ENCODE measurements at regions of chr12 and their contacts with region 1.

Region 1: GRCh38 chr12:53321074-53321814 is at the start of gene AAAS:
- DNase-seq: peak; percentile 98
- H3K4me3 Mint-ChIP-seq: peak within 1 kb of the TSS; percentile 89
- H3K27ac Mint-ChIP-seq: peak within 1 kb of the TSS; percentile 92
- H3K4me1 Mint-ChIP-seq: peaks cover 51% of the 10 kb centered on the region
- H3K27me3 Mint-ChIP-seq: peaks cover 6% of the 10 kb centered on the region

Region 2: GRCh38 chr12:53225635-53226424 is 95.4 kb before region 1 on chr12:
- CTCF ChIA-PET with region 1: no interaction called
- DNase-seq: no peak
- H3K4me3 Mint-ChIP-seq: no peak overlapping the region
- H3K27ac Mint-ChIP-seq: no peak overlapping the region
- H3K4me1 Mint-ChIP-seq: peaks cover 58% of the 10 kb centered on the region
- H3K27me3 Mint-ChIP-seq: peaks cover 27% of the 10 kb centered on the region

Region 3: GRCh38 chr12:53267999-53268647 is 53.1 kb before region 1 on chr12 and contains the start of gene ESPL1:
- CTCF ChIA-PET with region 1: interaction called, 18 read pairs
- DNase-seq: peak; percentile 87
- H3K4me3 Mint-ChIP-seq: peak within 1 kb of the TSS; percentile 99
- H3K27ac Mint-ChIP-seq: peak within 1 kb of the TSS; percentile 93
- H3K4me1 Mint-ChIP-seq: peaks cover 50% of the 10 kb centered on the region
- H3K27me3 Mint-ChIP-seq: no peaks in the 10 kb centered on the region

Region 4: GRCh38 chr12:53336181-53336681 is 15.0 kb after region 1 on chr12 and contains the start of gene SP7:
- CTCF ChIA-PET with region 1: interaction called, 17 read pairs
- DNase-seq: no peak
- H3K4me3 Mint-ChIP-seq: no peak within 1 kb of the TSS
- H3K27ac Mint-ChIP-seq: no peak within 1 kb of the TSS
- H3K4me1 Mint-ChIP-seq: peaks cover 15% of the 10 kb centered on the region
- H3K27me3 Mint-ChIP-seq: peaks cover 96% of the 10 kb centered on the region

Region 5: GRCh38 chr12:53418221-53418620 is 97.0 kb after region 1 on chr12:
- CTCF ChIA-PET with region 1: interaction called, 11 read pairs
- DNase-seq: no peak
- H3K4me3 Mint-ChIP-seq: no peak overlapping the region
- H3K27ac Mint-ChIP-seq: no peak overlapping the region
- H3K4me1 Mint-ChIP-seq: peaks cover 26% of the 10 kb centered on the region
- H3K27me3 Mint-ChIP-seq: no peaks in the 10 kb centered on the region

Region 6: DNA sequence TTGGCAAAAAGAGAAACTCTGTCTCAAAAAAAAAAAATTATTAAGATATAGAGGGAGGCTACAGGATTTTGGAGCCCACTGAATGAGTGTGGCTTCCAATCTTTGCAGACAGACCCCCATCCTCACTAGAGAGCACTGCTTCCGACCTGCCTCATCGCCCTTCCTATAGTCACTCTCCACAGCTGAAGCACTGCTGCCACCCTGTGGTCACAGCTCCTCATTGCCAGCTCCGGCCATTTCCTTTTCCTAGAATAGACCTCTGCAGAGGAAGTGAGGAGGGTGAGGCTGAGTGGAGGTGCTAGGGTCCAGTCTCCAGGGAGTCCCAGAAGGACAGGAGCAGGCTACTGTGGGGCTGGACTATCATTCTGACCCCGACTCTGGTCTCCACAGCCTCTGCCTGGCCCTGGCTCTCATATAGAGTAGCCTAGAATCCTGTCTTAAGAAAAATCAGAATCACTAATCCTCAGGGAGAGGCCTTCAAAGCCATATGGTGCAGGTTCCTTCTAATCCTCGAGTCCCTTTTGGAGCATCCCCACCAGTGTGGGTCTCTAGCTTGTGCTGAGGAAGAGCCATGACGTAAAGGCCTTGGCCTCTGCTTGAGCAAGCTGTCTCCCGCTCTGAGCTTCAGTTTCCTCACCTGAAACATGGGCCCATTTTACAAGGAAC is 187.4 kb after region 1 on chr12:
- CTCF ChIA-PET with region 1: interaction called, 19 read pairs
- DNase-seq: peak; percentile 90
- H3K4me3 Mint-ChIP-seq: no peak overlapping the region
- H3K27ac Mint-ChIP-seq: peak overlapping the region; percentile 34
- H3K4me1 Mint-ChIP-seq: peaks cover 12% of the 10 kb centered on the region
- H3K27me3 Mint-ChIP-seq: no peaks in the 10 kb centered on the region

Measured in activated naive CD4-positive, alpha-beta T cell treated with anti-CD3 and anti-CD28 coated beads, Interleukin-2, amount 10 ng/mL, durations not matched to agents 7 days and 5 days (primary cell).